ENCODE measurements at regions of chr7 and their contacts with region 1.

Region 1: GRCh38 chr7:143287935-143288826 is at the start of gene CASP2:
- DNase-seq: peak; percentile 99
- H3K4me3 Mint-ChIP-seq: peak within 1 kb of the TSS; percentile 89
- H3K27ac Mint-ChIP-seq: peak within 1 kb of the TSS; percentile 82
- H3K4me1 Mint-ChIP-seq: peaks cover 55% of the 10 kb centered on the region
- H3K27me3 Mint-ChIP-seq: no peaks in the 10 kb centered on the region
- total RNA-seq, gene CASP2: 117 to 122 TPM

Region 2: DNA sequence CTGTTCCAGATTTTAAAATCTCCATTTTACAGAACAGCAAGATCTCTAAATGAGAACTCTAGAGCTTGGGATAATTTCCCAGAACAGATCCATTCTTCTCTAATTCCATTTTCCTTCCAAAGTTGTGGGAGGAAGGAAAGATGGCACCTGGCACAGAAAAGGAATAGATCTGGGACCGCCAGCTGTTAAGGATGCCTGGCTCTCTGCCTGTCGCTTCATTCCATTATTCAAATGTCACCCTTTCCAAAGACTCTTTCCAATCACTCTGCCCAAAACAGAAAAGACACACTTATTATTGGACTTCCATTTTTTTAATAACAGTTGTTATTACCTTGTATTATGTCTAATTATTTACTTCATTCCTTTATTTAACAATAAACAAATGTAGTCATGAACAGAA is 260.5 kb before region 1 on chr7:
- CTCF ChIA-PET with region 1: no interaction called
- POLR2A ChIA-PET with region 1: no interaction called
- DNase-seq: no peak
- H3K4me3 Mint-ChIP-seq: no peak overlapping the region
- H3K27ac Mint-ChIP-seq: no peak overlapping the region
- H3K4me1 Mint-ChIP-seq: peaks cover 4% of the 10 kb centered on the region
- H3K27me3 Mint-ChIP-seq: peaks cover 25% of the 10 kb centered on the region

Region 3: DNA sequence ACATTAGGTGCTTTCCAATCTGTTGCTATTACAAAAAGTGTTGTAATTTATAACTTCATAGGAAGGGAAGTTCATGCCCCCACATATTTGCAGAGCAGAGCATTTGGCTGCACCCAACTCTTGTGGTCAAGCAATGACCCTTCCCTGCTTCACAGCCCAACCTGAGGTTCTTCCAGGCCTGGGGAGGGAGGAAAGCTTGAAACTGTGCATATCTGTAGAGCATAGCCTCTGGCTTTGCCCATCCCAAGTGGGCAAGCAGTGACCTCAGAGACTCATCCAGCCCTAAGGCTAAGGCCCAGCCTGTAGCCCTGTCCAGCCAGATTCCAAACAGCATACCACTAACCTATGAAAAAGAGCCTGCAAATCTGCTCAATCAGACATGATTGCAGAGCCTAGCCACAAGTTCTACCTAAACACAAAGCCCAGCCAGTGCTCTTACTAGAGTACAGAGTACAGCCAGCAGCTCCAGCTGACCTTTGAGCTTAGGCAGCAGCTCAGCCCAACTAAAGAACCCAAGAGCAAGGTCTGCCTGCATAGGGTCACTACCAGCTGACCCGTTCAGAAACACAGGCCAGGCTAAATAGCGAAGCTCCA is 39.3 kb before region 1 on chr7:
- CTCF ChIA-PET with region 1: interaction called, 250 read pairs
- POLR2A ChIA-PET with region 1: interaction called, 18 read pairs
- DNase-seq: no peak
- H3K4me3 Mint-ChIP-seq: no peak overlapping the region
- H3K27ac Mint-ChIP-seq: no peak overlapping the region
- H3K4me1 Mint-ChIP-seq: peaks cover 87% of the 10 kb centered on the region
- H3K27me3 Mint-ChIP-seq: no peaks in the 10 kb centered on the region

Region 4: DNA sequence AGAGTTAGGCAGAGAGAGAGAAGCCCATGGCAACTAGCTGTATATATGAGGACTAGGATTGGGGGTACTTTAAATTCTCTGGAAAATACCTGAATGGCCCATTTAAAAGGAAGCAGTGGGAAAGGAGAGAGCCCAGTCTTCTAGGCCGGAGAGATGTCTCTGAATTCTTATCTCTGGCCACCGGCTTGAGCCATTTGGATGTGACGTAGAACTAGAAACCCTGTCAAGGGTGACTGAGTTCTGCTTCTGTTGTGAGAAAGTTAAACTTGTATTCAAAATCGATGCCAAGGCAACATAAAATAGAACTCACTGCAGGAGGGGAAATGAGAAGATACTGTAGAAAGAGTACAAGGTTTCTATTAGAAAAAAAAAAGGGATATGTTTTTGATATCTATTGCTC is 31.2 kb before region 1 on chr7:
- CTCF ChIA-PET with region 1: interaction called, 5 read pairs
- POLR2A ChIA-PET with region 1: interaction called, 15 read pairs
- DNase-seq: no peak
- H3K4me3 Mint-ChIP-seq: no peak overlapping the region
- H3K27ac Mint-ChIP-seq: peak overlapping the region; percentile 58
- H3K4me1 Mint-ChIP-seq: peaks cover 74% of the 10 kb centered on the region
- H3K27me3 Mint-ChIP-seq: no peaks in the 10 kb centered on the region

Region 5: DNA sequence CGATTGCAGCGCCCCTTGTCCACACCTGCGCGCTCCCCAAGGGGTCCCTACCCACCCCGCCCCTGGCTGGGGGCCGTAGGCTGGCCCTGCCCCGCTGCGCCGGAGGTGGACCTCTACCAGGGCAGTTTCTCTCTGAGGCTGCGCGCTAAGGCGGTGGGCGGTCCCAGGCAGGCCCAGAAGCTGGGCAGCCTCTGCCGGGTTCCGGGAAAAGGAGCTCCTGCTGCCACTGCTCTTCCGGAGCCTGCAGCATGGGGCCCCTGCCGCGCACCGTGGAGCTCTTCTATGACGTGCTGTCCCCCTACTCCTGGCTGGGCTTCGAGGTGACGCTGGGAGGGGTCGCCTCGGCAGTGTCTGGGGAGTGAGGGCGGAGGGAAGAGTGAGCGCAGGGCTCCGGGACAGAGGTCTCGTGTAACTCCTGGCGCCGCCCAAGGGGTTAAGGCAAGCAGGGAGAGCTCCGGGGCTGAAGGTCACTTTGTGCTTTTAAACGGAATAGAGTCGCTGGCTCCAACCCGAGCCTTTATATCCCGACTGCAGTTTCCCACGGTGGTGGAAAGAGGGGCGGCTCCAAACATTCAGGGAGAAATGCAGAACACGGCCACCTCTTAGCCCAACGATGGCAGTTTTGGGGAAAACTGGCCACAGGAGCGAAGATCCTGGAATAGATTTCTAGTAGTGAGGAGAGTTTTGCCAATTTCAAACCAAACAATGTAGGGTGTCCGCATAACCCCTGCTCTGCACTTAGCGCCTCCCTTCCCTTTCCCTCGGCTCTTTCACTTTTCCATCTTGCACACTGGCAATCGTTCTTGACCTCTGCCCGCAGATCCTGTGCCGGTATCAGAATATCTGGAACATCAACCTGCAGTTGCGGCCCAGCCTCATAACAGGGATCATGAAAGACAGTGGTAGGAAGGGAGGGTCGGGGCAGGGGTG is 24.6 kb before region 1 on chr7 and contains the start of gene GSTK1:
- CTCF ChIA-PET with region 1: interaction called, 11 read pairs
- POLR2A ChIA-PET with region 1: interaction called, 56 read pairs
- DNase-seq: peak; percentile 86
- H3K4me3 Mint-ChIP-seq: peak within 1 kb of the TSS; percentile 97
- H3K27ac Mint-ChIP-seq: peak within 1 kb of the TSS; percentile 87
- H3K4me1 Mint-ChIP-seq: peaks cover 73% of the 10 kb centered on the region
- H3K27me3 Mint-ChIP-seq: no peaks in the 10 kb centered on the region
- total RNA-seq, gene GSTK1: 502 to 518 TPM

Region 6: GRCh38 chr7:143299840-143300239 is 11.7 kb after region 1 on chr7:
- CTCF ChIA-PET with region 1: interaction called, 31 read pairs
- POLR2A ChIA-PET with region 1: interaction called, 15 read pairs
- DNase-seq: peak; percentile 67
- H3K4me3 Mint-ChIP-seq: no peak overlapping the region
- H3K27ac Mint-ChIP-seq: peak overlapping the region; percentile 47
- H3K4me1 Mint-ChIP-seq: peaks cover 72% of the 10 kb centered on the region
- H3K27me3 Mint-ChIP-seq: no peaks in the 10 kb centered on the region

Region 7: GRCh38 chr7:143321734-143322133 is 33.6 kb after region 1 on chr7:
- CTCF ChIA-PET with region 1: no interaction called
- POLR2A ChIA-PET with region 1: no interaction called
- DNase-seq: no peak
- H3K4me3 Mint-ChIP-seq: no peak overlapping the region
- H3K27ac Mint-ChIP-seq: no peak overlapping the region
- H3K4me1 Mint-ChIP-seq: peaks cover 15% of the 10 kb centered on the region
- H3K27me3 Mint-ChIP-seq: no peaks in the 10 kb centered on the region

Region 8: GRCh38 chr7:143434660-143435059 is 146.5 kb after region 1 on chr7:
- CTCF ChIA-PET with region 1: no interaction called
- POLR2A ChIA-PET with region 1: no interaction called
- DNase-seq: no peak
- H3K4me3 Mint-ChIP-seq: no peak overlapping the region
- H3K27ac Mint-ChIP-seq: no peak overlapping the region
- H3K4me1 Mint-ChIP-seq: peaks cover 13% of the 10 kb centered on the region
- H3K27me3 Mint-ChIP-seq: peaks cover 3% of the 10 kb centered on the region

Region 9: GRCh38 chr7:143458263-143458662 is 170.1 kb after region 1 on chr7:
- CTCF ChIA-PET with region 1: no interaction called
- POLR2A ChIA-PET with region 1: no interaction called
- DNase-seq: no peak
- H3K4me3 Mint-ChIP-seq: no peak overlapping the region
- H3K27ac Mint-ChIP-seq: no peak overlapping the region
- H3K4me1 Mint-ChIP-seq: no peaks in the 10 kb centered on the region
- H3K27me3 Mint-ChIP-seq: no peaks in the 10 kb centered on the region

Measured in activated CD4-positive, alpha-beta memory T cell treated with anti-CD3 and anti-CD28 coated beads, Interleukin-2, amount 10 ng/mL, durations not matched to agents 7 days and 5 days (primary cell).